ENCODE measurements at regions of chr3 and their contacts with region 1.

Region 1: GRCh38 chr3:184229394-184230080 is at the start of gene VWA5B2:
- DNase-seq: peak in 1 of 2 experiments; percentile 86
- H3K4me3 ChIP-seq: peak within 1 kb of the TSS; percentile 33 to 59 (median 45)
- H3K27ac ChIP-seq: no peak within 1 kb of the TSS
- H3K4me1 ChIP-seq: peaks cover 0 to 20% (median 4%) of the 10 kb centered on the region in 4 experiments; a peak in 5 of 7 replicates
- H3K27me3 ChIP-seq: peaks cover 35 to 60% (median 53%) of the 10 kb centered on the region in 4 experiments
- CTCF ChIP-seq: peak in 2 of 3 experiments; percentile 14 to 15; a peak in 1 of 4 replicates
- EP300 ChIP-seq: no peak
- POLR2A ChIP-seq: no peak
- RAD21 ChIP-seq: no peak; a peak in 1 of 4 replicates
- total RNA-seq, gene VWA5B2: 0.50 and 0.56 TPM in 2 replicates

Region 2: DNA sequence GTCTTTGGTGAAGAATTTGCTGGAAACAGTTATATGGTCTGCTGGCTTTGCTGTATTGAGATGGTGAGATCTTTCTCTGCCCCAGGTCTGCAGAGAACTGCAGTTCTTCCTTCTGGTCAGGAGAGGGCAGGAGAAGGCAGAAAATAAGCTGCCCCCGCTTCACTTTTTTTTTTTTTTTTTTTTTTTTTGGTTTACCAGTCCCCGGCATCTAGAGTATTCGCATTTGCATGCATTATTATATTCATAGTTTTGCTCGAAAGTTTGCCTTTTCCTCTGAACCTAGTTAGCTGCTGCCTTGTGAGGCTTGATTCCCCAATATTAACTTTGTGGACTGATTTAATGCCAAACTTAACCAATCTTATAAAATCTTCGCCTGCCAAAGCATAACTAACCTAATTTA is 334.2 kb before region 1 on chr3:
- CTCF ChIA-PET with region 1: interaction called, 14 read pairs
- POLR2A ChIA-PET with region 1: no interaction called
- DNase-seq: no peak
- H3K4me3 ChIP-seq: no peak overlapping the region
- H3K27ac ChIP-seq: no peak overlapping the region
- H3K4me1 ChIP-seq: peaks cover 0 to 3% (median 0%) of the 10 kb centered on the region in 4 experiments; a peak in 3 of 7 replicates
- H3K27me3 ChIP-seq: no peaks in the 10 kb centered on the region
- CTCF ChIP-seq: peak; percentile 45 to 79 (median 78)
- EP300 ChIP-seq: no peak
- POLR2A ChIP-seq: no peak
- RAD21 ChIP-seq: peak; percentile 88 to 93

Region 3: DNA sequence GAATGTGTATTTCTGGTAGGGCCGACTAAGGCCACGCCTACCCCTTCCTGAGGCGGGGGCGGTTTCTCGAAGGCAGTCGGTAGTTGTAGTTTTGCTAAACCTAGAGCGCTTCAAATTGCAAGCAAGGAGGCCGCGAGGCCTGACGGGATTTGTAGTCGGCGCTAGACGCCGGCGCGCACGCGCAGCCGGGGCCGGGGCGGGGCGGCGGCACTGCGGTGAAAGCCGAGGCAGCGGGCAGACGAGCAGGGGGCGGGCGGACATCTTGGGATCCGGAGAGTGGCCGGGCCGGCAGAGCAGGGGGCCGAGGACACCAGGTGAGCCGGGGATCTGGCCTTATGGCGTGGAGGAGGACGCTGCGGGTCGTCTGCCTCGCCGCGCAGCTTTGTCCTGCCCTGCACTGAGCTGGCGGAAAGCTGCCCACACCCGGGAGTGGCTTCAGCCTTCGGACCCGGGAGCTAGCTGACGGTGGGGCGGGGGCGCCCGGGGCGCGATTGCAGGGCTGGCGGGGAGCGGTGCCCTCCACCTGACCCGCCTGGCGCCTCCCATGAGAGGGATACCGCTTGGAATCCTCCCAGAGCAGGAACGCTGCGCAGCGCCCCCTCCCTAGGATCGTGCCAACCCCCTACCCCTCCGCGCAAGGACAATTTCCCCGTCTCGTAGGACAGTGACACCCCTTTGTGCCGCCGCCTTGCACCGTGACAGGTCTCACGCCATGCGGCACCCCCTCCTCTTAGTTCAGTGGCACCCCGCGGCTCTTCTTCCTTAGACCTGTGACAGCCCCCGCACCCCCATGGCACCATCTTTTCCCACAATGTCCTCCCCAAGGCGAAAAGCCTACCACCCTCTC is 54.7 kb before region 1 on chr3 and contains the start of gene AP2M1:
- CTCF ChIA-PET with region 1: interaction called, 22 read pairs
- POLR2A ChIA-PET with region 1: interaction called, 6 read pairs
- DNase-seq: peak; percentile 96 to 98
- H3K4me3 ChIP-seq: peak within 1 kb of the TSS; percentile 68 to 92 (median 86)
- H3K27ac ChIP-seq: peak within 1 kb of the TSS; percentile 87
- H3K4me1 ChIP-seq: peaks cover 0 to 23% (median 15%) of the 10 kb centered on the region in 4 experiments; a peak in 6 of 7 replicates
- H3K27me3 ChIP-seq: no peaks in the 10 kb centered on the region
- CTCF ChIP-seq: 0 out of 4 replicates have a peak, but pooled peaks of 1 of the 3 experiments have one; percentile 5
- EP300 ChIP-seq: no peak
- POLR2A ChIP-seq: peak in 1 of 2 experiments; percentile 71; a peak in 2 of 3 replicates
- RAD21 ChIP-seq: no peak
- total RNA-seq, gene AP2M1: 391 and 403 TPM in 2 replicates

Region 4: GRCh38 chr3:184203526-184203925 is 26.0 kb before region 1 on chr3:
- CTCF ChIA-PET with region 1: interaction called, 39 read pairs
- POLR2A ChIA-PET with region 1: interaction called, 3 read pairs
- DNase-seq: no peak
- H3K4me3 ChIP-seq: no peak overlapping the region
- H3K27ac ChIP-seq: no peak overlapping the region
- H3K4me1 ChIP-seq: no peaks in the 10 kb centered on the region
- H3K27me3 ChIP-seq: no peaks in the 10 kb centered on the region
- CTCF ChIP-seq: no peak
- EP300 ChIP-seq: no peak
- POLR2A ChIP-seq: no peak
- RAD21 ChIP-seq: no peak

Region 5: DNA sequence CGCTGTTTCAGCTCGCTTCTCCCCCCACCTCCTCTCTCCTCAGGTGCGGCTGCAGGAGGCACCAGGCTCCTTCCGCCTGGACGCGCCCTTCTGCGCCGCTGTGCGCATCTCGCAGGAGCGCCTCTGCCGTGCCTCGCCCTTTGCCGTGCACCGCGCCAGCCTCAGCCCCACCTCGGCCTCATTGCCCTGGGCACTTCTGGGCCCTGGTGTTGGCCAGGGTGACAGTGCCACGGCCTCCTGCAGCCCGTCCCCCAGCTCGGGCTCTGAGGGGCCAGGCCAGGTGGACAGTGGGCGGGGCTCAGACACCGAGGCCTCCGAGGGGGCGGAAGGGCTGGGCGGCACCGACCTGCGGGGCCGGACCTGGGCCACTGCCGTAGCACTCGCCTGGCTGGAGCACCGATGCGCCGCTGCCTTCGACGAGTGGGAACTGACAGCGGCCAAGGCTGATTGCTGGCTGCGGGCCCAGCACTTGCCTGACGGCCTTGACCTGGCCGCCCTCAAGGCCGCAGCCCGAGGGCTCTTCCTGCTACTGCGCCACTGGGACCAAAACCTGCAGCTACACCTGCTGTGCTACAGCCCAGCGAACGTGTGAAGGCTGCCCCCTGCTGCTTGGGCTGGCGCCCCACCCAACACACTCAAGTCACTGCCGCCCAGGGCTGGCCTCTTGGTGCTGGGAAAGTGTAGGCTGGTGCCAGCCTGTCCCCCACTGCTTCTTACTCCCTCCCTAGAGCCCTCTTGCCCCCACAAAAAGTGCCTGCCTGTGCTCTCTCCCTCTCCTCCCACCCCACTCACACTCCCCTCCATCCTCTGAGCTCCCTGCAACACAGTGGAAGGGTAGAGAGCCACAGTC is 12.1 kb after region 1 on chr3:
- CTCF ChIA-PET with region 1: interaction called, 183 read pairs
- POLR2A ChIA-PET with region 1: interaction called, 11 read pairs
- DNase-seq: peak in 1 of 2 experiments; percentile 57
- H3K4me3 ChIP-seq: peak overlapping the region in 3 of 4 experiments; percentile 26 to 54 (median 42); a peak in 6 of 8 replicates
- H3K27ac ChIP-seq: no peak overlapping the region
- H3K4me1 ChIP-seq: peaks cover 0 to 5% (median 1%) of the 10 kb centered on the region in 4 experiments; a peak in 3 of 7 replicates
- H3K27me3 ChIP-seq: no peaks in the 10 kb centered on the region; a peak in 2 of 7 replicates
- CTCF ChIP-seq: peak in 2 of 3 experiments; percentile 41 to 56; a peak in 3 of 4 replicates
- EP300 ChIP-seq: no peak
- POLR2A ChIP-seq: no peak
- RAD21 ChIP-seq: peak; percentile 45 to 65

Region 6: DNA sequence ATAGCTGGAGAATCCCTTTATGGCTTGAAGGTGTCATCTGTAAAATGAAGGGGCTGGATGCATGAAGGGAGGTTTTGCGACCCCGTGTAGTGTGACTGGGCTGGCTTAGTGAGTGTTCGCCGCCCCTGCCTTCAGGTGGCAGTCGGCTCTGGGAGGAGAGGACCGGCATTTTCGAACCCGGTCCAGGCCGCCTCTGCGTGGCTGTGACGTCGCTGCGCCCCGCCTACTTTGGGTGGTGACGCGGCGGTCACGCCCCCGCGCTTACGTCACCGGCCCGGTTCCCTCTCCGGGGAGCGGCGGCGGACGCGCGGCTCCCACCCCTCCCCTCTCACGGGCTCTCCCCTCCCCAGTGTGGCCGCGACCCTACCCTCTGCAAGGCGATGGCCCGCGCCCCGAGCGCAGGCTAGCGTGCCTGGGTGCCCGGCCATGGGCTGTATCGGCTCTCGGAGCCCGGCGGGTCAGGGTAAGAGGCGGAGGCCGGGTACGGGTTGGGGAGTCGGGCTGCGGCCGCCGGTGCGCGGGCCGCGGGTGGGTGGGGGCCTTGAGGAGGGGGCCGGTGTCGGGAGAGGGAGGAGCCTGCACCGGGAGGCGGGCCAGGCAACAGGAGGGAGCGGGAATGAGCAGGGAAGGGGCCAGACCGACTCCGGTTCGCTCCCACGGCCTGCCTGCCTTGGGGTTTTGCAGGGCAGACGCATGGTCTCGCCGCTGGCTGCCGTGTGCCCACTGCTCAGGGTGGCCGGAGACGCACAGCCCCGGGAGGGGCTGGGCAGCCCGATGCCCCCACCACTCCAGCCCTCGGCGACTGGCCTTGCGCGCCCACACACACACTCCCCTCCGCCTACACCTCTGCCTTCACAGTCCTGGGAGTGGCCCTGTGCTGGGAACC is 106.4 kb after region 1 on chr3:
- CTCF ChIA-PET with region 1: interaction called, 11 read pairs
- POLR2A ChIA-PET with region 1: no interaction called
- DNase-seq: peak; percentile 64 to 99
- H3K4me3 ChIP-seq: peak overlapping the region; percentile 76 to 83 (median 80)
- H3K27ac ChIP-seq: peak overlapping the region; percentile 82
- H3K4me1 ChIP-seq: peaks cover 5 to 27% (median 18%) of the 10 kb centered on the region in 4 experiments
- H3K27me3 ChIP-seq: no peaks in the 10 kb centered on the region
- CTCF ChIP-seq: peak in 1 of 3 experiments; percentile 28; a peak in 1 of 4 replicates
- EP300 ChIP-seq: peak; percentile 26 to 30; a peak in 2 of 3 replicates
- POLR2A ChIP-seq: peak in 1 of 2 experiments; percentile 84; a peak in 2 of 3 replicates
- RAD21 ChIP-seq: peak; percentile 9 to 23; a peak in 2 of 4 replicates

Measured in H1 (cell line).